ENCODE measurements at regions of chr6 and their contacts with region 1.

Region 1: DNA sequence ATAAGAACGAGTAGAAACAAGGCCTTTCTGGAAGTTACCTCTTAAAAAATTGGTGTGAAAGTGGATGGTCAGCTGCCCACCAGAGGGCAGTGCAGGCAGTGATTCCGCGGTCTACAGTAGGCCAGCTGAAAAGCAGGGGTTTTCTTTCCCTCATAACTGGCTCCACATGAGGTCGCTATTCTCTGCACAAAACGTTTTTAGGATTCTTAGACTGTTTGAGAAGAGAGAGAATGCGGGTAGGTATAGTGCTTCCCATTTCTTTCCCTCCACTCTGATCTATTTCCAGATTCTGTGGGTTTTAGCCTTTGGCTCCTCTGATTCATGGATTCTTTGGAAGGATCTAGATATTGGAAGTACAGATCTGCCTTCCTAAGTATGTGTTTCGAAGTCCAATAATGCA is 14.2 kb downstream of the FIG4 start:
- DNase-seq: peak; percentile 67 to 94 (median 84)

Region 2: GRCh38 chr6:109526905-109527628 is 178.2 kb before region 1 on chr6:
- intact Hi-C with region 1: loop called (anchors 10 kb)
- DNase-seq: peak in 30 of 42 donors; percentile 3 to 76 (median 37)

Region 3: DNA sequence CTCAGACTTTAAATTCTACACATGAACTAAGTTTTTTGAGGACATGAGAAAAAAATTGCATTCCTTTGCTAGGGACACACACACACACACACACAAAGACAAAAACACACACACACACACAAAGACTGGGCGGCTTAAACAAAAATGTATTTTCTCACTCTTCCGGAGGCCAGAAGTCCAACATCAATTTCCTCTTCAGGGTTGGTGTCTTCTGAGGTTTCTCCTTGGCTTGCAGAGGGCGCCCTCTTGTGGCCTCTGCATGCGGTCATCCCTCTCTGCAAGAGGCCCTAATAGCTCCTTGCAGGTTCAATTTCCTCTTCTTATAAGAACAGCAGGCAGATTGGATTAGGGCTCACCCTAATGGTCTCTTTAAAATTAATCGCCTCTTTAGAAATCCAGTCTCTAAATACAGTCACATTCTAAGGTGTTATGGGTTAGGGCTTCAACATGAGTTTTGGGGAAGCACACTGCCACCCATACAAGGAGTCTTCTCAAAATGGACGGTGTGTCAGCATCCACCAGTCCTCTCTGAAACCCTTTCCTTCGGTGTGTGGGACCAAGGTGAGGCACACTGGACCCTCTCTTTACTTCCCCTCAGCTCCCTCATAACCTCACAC is 334.2 kb after region 1 on chr6:
- intact Hi-C with region 1: loop called (anchors 2 kb)
- DNase-seq: peak; percentile 69 to 94 (median 89)

Region 4: DNA sequence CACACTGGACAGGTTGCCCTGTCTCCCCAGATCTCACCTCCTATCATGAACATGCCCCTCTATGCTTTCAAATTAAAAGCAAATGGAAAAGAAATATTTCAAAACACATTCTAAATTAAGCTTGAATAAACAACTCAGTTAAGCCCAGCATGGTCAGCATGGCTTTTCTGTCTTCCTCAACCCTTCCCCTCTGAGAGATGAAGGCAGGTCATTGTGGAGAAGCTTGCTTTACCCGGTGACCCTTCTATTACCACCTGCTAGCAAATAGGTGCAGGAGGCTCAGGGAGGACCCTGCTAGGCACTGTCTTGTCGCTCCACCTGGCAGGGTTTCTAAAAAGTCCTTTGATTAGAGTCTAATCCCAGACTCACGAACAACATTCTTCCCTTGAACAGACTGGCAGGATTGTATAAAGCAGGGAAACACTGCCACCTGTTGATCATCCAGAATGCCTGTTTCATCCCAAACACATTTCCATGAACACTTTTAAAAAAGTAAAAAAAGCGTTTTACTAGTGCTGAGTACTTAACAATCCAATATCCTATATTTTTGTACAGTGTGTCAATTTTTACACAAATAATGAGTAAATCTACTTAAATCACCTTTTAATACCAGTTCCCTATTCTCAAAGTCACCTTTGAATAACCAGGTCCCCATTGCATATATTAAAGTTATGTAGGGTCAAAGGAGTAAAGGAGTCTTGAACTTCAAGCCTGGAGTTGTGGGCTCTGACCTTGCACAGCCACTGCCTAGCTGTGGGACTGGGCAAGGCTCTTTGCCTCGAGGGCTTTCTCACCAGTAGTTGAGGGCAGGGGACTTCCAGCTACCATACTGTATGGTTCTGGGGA is 348.4 kb after region 1 on chr6:
- intact Hi-C with region 1: loop called (anchors 5 kb)
- DNase-seq: peak in 25 of 42 donors; percentile 26 to 77 (median 57)

Region 5: DNA sequence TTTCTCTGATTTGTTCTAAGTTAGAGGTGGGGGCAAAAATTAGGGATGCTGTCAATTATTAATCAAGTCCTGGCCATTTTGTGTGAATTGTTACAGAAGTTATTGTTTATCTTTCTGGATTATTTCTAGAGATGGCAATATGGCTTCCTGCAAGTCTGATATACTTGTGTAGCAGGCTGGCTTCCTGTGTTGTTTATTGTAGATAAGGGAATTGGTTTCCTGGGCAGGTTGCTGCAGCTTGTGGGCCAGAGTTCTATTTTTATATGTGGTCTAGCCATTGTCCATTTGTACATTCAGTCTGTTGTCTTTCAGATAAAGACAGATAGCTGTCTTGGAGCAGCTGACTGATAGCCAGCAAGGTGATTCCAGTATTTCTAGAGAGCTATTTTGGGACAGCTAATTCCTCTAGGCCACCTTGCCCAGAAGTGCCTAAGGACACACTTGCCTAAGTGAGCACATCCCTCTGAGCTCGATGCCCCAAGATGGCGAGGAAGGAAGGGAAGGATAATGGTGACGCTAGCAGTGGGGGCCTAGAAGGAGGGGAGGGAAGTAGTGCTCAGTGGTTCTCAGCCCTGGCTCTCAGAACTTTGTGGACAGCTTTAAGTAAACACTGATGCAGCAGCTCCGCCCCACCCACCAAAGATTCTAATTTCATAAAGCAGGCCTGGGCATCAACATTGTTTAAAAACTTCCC is 684.6 kb after region 1 on chr6:
- intact Hi-C with region 1: loop called (anchors 5 kb)
- DNase-seq: no peak

Measured in head of caudate nucleus (tissue), 42 donors.